CD4-positive, alpha-beta memory T cell (primary cell): ENCODE measurements at regions of chr11 and their contacts with region 1.

Region 1: DNA sequence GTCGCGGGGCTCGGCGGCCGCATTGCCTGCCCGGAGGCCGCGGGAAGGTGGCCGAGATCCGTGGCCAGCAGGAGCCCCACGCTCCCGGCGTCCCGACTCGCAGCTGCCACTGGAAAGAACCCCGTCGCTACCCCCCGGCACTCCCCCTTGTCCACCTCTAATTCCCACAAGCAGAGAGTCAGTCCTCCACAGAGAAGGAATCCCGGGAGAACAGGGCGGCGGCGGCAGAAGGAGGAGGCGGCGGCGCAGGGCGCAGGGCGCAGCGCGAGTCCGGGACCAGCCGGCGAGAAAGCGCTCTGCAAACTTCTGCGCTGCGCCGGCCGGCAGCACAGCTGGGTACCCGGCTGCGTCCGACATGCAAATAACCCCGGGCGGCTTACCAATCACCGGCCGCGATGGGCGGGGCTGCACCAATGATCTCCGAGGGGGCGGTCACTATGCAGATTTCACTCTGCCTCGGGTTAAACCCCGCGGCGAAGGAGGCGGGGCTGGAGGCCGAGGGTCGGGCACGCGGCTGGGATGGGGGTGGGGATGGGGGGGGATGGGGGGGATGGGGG is at the start of gene ABTB2:
- DNase-seq: peak; percentile 95 to 98 (median 96)
- H3K4me3 ChIP-seq: peak within 1 kb of the TSS; percentile 14 to 79
- H3K4me3 Mint-ChIP-seq: peak within 1 kb of the TSS; percentile 86 to 96 (median 92)
- H3K27ac ChIP-seq: peak within 1 kb of the TSS; percentile 34
- H3K27ac Mint-ChIP-seq: peak within 1 kb of the TSS; percentile 58 to 94 (median 92)
- H3K4me1 ChIP-seq: peaks cover 26% of the 10 kb centered on the region
- H3K4me1 Mint-ChIP-seq: peaks cover 10 to 23% (median 19%) of the 10 kb centered on the region in 4 donors
- H3K27me3 ChIP-seq: peaks cover 28% of the 10 kb centered on the region
- H3K27me3 Mint-ChIP-seq: peaks cover 35 to 38% of the 10 kb centered on the region in 2 donors
- total RNA-seq, gene ABTB2: 0.35 to 0.39 TPM

Region 2: DNA sequence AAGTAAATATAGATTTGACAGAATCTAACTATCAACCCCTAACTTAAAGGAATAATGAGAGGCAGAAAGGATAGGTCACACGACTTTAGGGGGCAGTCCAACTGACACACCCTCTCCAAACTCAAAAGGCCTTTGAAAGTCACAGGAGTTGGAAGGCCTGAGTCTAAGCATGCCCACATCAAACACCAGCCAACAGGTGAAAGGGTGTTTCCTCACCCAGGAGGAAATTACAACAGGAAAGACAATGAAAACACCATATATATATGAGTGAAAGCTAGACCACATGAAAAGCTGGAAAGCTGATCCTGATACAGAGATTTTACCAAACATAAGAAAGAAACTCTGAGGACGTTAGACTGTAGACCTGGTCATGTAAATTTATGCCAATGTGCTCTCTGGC is 1352.6 kb before region 1 on chr11:
- CTCF ChIA-PET with region 1: no interaction called
- POLR2A ChIA-PET with region 1: no interaction called
- intact Hi-C with region 1: no loop called
- DNase-seq: peak; percentile 48 to 67 (median 58)
- H3K4me3 ChIP-seq: no peak overlapping the region
- H3K4me3 Mint-ChIP-seq: peak overlapping the region; percentile 9 to 65 (median 62)
- H3K27ac ChIP-seq: no peak overlapping the region
- H3K27ac Mint-ChIP-seq: peak overlapping the region; percentile 9 to 58 (median 16)
- H3K4me1 ChIP-seq: peaks cover 24% of the 10 kb centered on the region
- H3K4me1 Mint-ChIP-seq: peaks cover 21 to 39% (median 25%) of the 10 kb centered on the region in 4 donors
- H3K27me3 ChIP-seq: no peaks in the 10 kb centered on the region
- H3K27me3 Mint-ChIP-seq: peaks cover 0 to 3% of the 10 kb centered on the region in 2 donors

Region 3: GRCh38 chr11:33257897-33258630 is 1099.7 kb before region 1 on chr11:
- CTCF ChIA-PET with region 1: no interaction called
- POLR2A ChIA-PET with region 1: no interaction called
- intact Hi-C with region 1: loop called (anchors 2 kb)
- DNase-seq: peak; percentile 77 to 85 (median 80)
- H3K4me3 ChIP-seq: peak overlapping the region; percentile 53 to 85
- H3K4me3 Mint-ChIP-seq: peak overlapping the region; percentile 90 to 99 (median 96)
- H3K27ac ChIP-seq: peak overlapping the region; percentile 96
- H3K27ac Mint-ChIP-seq: peak overlapping the region; percentile 96 to 99 (median 98)
- H3K4me1 ChIP-seq: peaks cover 42% of the 10 kb centered on the region
- H3K4me1 Mint-ChIP-seq: peaks cover 29 to 51% (median 39%) of the 10 kb centered on the region in 4 donors
- H3K27me3 ChIP-seq: no peaks in the 10 kb centered on the region
- H3K27me3 Mint-ChIP-seq: no peaks in the 10 kb centered on the region

Region 4: GRCh38 chr11:33996498-33997454 is 361.0 kb before region 1 on chr11:
- CTCF ChIA-PET with region 1: interaction called, 35 read pairs
- POLR2A ChIA-PET with region 1: interaction called, 4 read pairs
- intact Hi-C with region 1: loop called (anchors 1 kb)
- DNase-seq: peak; percentile 71 to 77 (median 72)
- H3K4me3 ChIP-seq: no peak overlapping the region
- H3K4me3 Mint-ChIP-seq: peak overlapping the region in 6 of 8 donors; percentile 4 to 73 (median 62)
- H3K27ac ChIP-seq: no peak overlapping the region
- H3K27ac Mint-ChIP-seq: no peak overlapping the region
- H3K4me1 ChIP-seq: peaks cover 8% of the 10 kb centered on the region
- H3K4me1 Mint-ChIP-seq: peaks cover 6 to 11% (median 7%) of the 10 kb centered on the region in 4 donors
- H3K27me3 ChIP-seq: no peaks in the 10 kb centered on the region
- H3K27me3 Mint-ChIP-seq: peaks cover 14 to 23% of the 10 kb centered on the region in 2 donors

Region 5: DNA sequence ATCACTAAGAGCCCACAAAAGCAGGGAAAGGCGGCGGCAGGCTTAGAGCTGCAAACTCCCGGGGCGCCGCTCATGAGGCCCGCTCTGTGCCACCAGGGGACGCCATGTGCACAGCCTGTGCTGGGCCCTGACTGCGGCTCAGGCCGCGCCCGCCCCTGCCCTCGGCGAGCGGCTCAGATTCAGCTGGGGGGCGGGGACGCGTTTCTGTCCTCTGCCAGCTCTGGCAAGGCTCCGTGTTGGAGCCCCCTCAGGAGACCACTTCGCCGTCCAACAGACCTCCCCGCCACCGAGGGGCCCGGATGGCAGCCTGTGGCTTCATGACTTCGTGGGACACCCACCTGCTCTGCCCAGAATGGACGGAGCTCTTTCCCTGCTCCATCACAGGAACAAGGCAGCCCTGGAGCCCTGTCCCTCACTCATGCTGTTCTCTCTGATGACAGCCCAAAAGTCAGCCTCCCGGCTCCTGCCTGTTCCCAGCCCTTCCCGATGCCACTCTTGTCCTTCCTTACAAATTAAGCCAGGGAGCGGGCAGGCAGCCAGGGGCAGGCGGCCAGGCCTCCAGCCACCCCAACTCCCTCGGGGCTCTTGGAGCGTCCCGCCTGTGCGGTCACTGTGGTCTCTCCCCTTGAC is 183.3 kb before region 1 on chr11:
- CTCF ChIA-PET with region 1: interaction called, 123 read pairs
- POLR2A ChIA-PET with region 1: interaction called, 24 read pairs
- intact Hi-C with region 1: loop called (anchors 1 kb)
- DNase-seq: peak; percentile 67 to 76 (median 72)
- H3K4me3 ChIP-seq: no peak overlapping the region
- H3K4me3 Mint-ChIP-seq: peak overlapping the region in 7 of 8 donors; percentile 21 to 68 (median 57)
- H3K27ac ChIP-seq: no peak overlapping the region
- H3K27ac Mint-ChIP-seq: peak overlapping the region in 1 of 7 donors; percentile 35
- H3K4me1 ChIP-seq: peaks cover 6% of the 10 kb centered on the region
- H3K4me1 Mint-ChIP-seq: peaks cover 0 to 7% (median 1%) of the 10 kb centered on the region in 4 donors
- H3K27me3 ChIP-seq: no peaks in the 10 kb centered on the region
- H3K27me3 Mint-ChIP-seq: peaks cover 0 to 3% of the 10 kb centered on the region in 2 donors

Region 6: DNA sequence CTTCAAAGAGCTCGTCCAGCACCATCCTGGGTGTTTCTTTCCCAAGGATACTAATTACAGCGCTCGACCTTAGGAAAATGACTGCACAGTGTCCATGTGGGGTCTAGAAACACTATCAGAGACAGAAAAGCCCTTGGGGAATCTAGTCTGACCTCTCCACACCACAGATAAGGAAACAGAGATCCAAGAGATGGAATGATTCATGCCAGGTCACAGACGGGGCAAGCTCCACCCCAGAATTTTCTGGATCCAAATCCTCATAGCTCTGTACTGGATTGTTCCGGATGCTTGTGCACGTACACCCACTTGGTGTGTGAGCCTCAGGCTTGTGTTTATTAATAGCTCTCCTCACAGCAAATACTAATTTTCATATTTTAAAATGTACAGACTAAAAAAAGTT is 11.2 kb before region 1 on chr11:
- CTCF ChIA-PET with region 1: interaction called, 14 read pairs
- POLR2A ChIA-PET with region 1: no interaction called
- intact Hi-C with region 1: no loop called
- DNase-seq: no peak
- H3K4me3 ChIP-seq: no peak overlapping the region
- H3K4me3 Mint-ChIP-seq: no peak overlapping the region
- H3K27ac ChIP-seq: no peak overlapping the region
- H3K27ac Mint-ChIP-seq: no peak overlapping the region
- H3K4me1 ChIP-seq: no peaks in the 10 kb centered on the region
- H3K4me1 Mint-ChIP-seq: no peaks in the 10 kb centered on the region
- H3K27me3 ChIP-seq: no peaks in the 10 kb centered on the region
- H3K27me3 Mint-ChIP-seq: peaks cover 1 to 9% of the 10 kb centered on the region in 2 donors